ENCODE measurements at regions of chr1 and their contacts with region 1.

Region 1: DNA sequence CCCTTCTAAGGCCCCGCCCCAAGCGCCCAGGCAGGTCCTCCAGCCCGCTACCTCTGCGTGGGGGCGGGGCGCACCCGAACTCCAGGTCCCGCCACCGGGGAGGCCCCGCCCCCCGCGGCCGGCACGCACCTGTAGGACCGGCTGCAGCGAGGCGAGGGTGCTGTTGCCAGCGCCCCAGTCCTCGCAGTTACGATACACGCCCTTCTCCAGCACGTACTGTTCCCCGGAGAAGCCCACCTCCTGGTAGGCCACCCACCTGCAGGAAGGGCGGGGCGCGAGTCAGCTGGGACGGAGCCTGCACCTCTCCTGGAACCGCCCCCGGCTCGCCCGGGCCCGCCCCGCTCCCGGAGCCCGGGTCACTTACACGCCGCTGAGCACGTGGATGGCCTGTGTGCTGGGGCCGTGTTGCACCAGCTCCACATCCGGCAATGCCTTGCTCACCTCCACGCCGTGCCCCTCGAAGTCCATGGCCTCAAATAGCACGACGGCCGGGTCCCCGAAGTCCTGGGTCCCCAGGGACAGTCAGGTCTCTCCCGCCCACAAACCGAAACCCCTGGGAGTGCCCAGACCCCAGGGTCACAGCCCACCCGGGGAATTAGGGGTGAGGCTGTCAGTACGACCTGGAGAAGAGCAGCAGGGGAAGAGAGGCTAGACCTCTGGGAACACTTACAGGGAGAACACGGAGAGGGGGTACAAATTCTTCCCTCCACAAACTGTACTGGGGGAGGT is 17.3 kb downstream of the CRYBG2 start:
- DNase-seq: peak; percentile 89
- ATAC-seq: peak; percentile 93
- H3K4me3 Mint-ChIP-seq: peak overlapping the region; percentile 75
- H3K27ac Mint-ChIP-seq: no peak overlapping the region
- H3K4me1 Mint-ChIP-seq: no peaks in the 10 kb centered on the region
- H3K27me3 Mint-ChIP-seq: no peaks in the 10 kb centered on the region

Region 2: GRCh38 chr1:26306290-26307229 is 30.1 kb before region 1 on chr1 and contains the start of gene UBXN11:
- CTCF ChIA-PET with region 1: no interaction called
- POLR2A ChIA-PET with region 1: no interaction called
- intact Hi-C with region 1: loop called in 1 of 2 experiments (anchors 1 kb)
- DNase-seq: peak; percentile 96
- ATAC-seq: peak; percentile 94
- H3K4me3 Mint-ChIP-seq: peak within 1 kb of the TSS; percentile 90
- H3K27ac Mint-ChIP-seq: peak within 1 kb of the TSS; percentile 95
- H3K4me1 Mint-ChIP-seq: peaks cover 32% of the 10 kb centered on the region
- H3K27me3 Mint-ChIP-seq: no peaks in the 10 kb centered on the region
- total RNA-seq, gene UBXN11: 19.4 to 22.2 TPM

Region 3: GRCh38 chr1:26358411-26359384 is 22.1 kb after region 1 on chr1:
- CTCF ChIA-PET with region 1: interaction called, 3 read pairs
- POLR2A ChIA-PET with region 1: no interaction called
- intact Hi-C with region 1: loop called in 1 of 2 experiments (anchors 2 kb)
- DNase-seq: peak; percentile 85
- ATAC-seq: peak; percentile 86
- H3K4me3 Mint-ChIP-seq: peak overlapping the region; percentile 0
- H3K27ac Mint-ChIP-seq: peak overlapping the region; percentile 35
- H3K4me1 Mint-ChIP-seq: peaks cover 29% of the 10 kb centered on the region
- H3K27me3 Mint-ChIP-seq: peaks cover 11% of the 10 kb centered on the region

Region 4: GRCh38 chr1:26399034-26399433 is 62.4 kb after region 1 on chr1:
- CTCF ChIA-PET with region 1: interaction called, 5 read pairs
- POLR2A ChIA-PET with region 1: no interaction called
- intact Hi-C with region 1: loop called in 1 of 2 experiments (anchors 1 kb)
- DNase-seq: no peak
- ATAC-seq: no peak
- H3K4me3 Mint-ChIP-seq: no peak overlapping the region
- H3K27ac Mint-ChIP-seq: no peak overlapping the region
- H3K4me1 Mint-ChIP-seq: peaks cover 3% of the 10 kb centered on the region
- H3K27me3 Mint-ChIP-seq: peaks cover 9% of the 10 kb centered on the region

Region 5: DNA sequence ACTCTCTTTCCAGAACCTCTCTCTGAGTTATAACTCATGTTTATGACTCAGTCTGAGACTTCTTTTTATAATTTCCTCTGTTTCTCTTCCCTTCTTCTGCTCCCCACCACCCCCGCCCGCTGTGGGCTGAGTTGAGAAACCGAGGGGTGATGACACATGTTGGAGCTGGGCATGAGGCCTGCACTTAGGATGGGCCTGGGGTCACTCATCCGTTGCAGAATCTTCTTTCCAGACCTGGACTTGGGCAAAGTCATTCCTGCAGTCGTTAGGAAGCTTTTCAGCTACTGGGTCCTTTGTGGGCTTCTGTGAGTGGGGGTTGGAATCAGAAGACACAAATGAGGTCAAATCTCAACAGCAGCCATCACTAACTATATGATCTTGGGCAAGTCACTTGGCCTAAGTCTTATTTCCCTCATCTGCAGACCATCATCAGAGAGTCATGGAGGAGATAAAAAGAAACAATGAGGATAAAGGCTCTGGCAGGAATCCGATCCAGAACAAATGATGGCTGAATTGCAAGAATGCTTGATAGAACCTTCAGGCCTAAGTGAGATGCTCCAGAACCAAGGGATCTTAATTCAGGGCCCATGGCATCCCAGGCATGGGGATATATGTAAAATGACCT is 246.3 kb after region 1 on chr1:
- CTCF ChIA-PET with region 1: no interaction called
- POLR2A ChIA-PET with region 1: no interaction called
- intact Hi-C with region 1: no loop called
- DNase-seq: peak; percentile 93
- ATAC-seq: peak; percentile 55
- H3K4me3 Mint-ChIP-seq: peak overlapping the region; percentile 35
- H3K27ac Mint-ChIP-seq: peak overlapping the region; percentile 95
- H3K4me1 Mint-ChIP-seq: peaks cover 54% of the 10 kb centered on the region
- H3K27me3 Mint-ChIP-seq: no peaks in the 10 kb centered on the region